ENCODE measurements at regions of chr6 and their contacts with region 1.

Region 1: GRCh38 chr6:68502946-68503345 is 132.1 kb upstream of the ADGRB3 start:
- DNase-seq: no peak
- ATAC-seq: no peak
- H3K4me3 Mint-ChIP-seq: no peak overlapping the region
- H3K27ac Mint-ChIP-seq: no peak overlapping the region
- H3K4me1 Mint-ChIP-seq: no peaks in the 10 kb centered on the region
- H3K27me3 Mint-ChIP-seq: no peaks in the 10 kb centered on the region
- CTCF ChIP-seq: no peak

Region 2: DNA sequence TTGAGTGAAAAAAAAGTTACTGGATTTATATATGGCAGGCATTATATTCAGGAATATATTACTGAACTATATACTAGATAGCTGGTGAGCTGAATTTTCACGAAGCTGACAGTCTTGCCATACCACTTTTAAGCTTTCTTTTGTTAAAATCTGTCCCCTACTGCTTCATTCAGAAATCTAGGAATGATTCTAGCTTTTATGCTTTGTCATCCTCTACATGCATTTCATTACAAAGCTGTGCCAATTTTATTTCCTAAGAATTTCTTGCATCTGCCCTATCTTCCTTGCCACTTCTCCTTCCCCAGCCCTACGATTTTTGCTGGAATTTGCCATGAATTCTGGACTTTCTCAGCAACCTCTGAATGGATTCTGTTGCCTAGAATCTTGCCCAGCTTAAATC is 26.3 kb before region 1 on chr6:
- CTCF ChIA-PET with region 1: no interaction called
- POLR2A ChIA-PET with region 1: no interaction called
- intact Hi-C with region 1: loop called (anchors 1 kb)
- DNase-seq: no peak
- ATAC-seq: no peak
- H3K4me3 Mint-ChIP-seq: no peak overlapping the region
- H3K27ac Mint-ChIP-seq: no peak overlapping the region
- H3K4me1 Mint-ChIP-seq: no peaks in the 10 kb centered on the region
- H3K27me3 Mint-ChIP-seq: no peaks in the 10 kb centered on the region
- CTCF ChIP-seq: no peak